Panc1 (cell line): ENCODE measurements at regions of chr17 and their contacts with region 1.

Region 1: DNA sequence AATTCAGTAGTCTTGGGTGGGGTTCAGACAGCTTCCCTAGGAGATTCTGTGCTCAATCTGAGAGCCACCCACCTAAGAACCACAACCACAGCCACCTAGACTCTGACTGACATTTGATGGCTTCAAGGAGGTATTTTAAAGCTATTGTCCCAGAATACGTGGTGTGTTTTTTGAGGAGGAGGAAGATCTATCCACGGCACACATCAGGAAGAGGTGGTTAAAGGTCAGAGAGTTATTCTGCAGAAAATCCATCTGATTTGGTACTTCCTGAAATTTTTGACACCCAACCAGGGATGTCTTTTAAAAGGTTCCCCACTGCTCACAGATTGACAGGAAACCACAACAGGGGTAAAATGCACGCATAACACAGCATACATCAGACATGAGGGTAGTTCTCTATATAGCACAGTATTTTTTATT is 25.1 kb downstream of the SMARCE1 start:
- DNase-seq: no peak
- ATAC-seq: no peak
- H3K4me3 ChIP-seq: no peak overlapping the region
- H3K27ac ChIP-seq: no peak overlapping the region
- H3K4me1 ChIP-seq: no peaks in the 10 kb centered on the region
- H3K27me3 ChIP-seq: peaks cover 13% of the 10 kb centered on the region
- CTCF ChIP-seq: no peak

Region 2: DNA sequence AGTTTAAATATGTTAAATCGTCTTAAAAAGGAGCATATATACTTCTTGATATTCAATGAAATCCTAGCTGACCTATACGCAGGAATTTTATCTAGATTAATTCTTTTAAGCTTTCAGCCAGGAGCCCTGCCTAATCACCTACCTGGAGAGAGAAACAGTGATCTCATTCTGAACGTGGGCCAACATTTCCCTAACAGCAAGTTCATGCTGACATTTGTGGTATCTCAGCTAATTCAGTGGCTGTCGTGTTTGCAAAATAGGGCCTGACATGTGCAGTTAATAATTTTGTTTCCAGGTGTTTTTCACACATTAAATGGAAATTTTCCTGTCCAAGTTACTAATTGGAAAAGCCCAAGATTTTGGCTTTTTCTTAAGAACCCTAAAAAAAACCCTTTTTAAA is 63.7 kb after region 1 on chr17:
- CTCF ChIA-PET with region 1: interaction called, 10 read pairs
- POLR2A ChIA-PET with region 1: no interaction called
- in situ Hi-C with region 1: no loop called
- intact Hi-C with region 1: no loop called
- DNase-seq: no peak
- ATAC-seq: no peak
- H3K4me3 ChIP-seq: no peak overlapping the region
- H3K27ac ChIP-seq: no peak overlapping the region
- H3K4me1 ChIP-seq: no peaks in the 10 kb centered on the region
- H3K27me3 ChIP-seq: peaks cover 7% of the 10 kb centered on the region; the same call in 1 of the 2 replicates
- CTCF ChIP-seq: no peak